Right cardiac atrium (tissue), 5 donors: ENCODE measurements at regions of chr6 and their contacts with region 1.

Region 1: GRCh38 chr6:147604373-147604772 is 95.9 kb downstream of the SAMD5 start:
- DNase-seq: no peak
- ATAC-seq: no peak
- H3K4me3 ChIP-seq: no peak overlapping the region
- H3K27ac ChIP-seq: peak overlapping the region; percentile 13
- H3K4me1 ChIP-seq: peaks cover 3% of the 10 kb centered on the region
- H3K27me3 ChIP-seq: no peaks in the 10 kb centered on the region

Region 2: DNA sequence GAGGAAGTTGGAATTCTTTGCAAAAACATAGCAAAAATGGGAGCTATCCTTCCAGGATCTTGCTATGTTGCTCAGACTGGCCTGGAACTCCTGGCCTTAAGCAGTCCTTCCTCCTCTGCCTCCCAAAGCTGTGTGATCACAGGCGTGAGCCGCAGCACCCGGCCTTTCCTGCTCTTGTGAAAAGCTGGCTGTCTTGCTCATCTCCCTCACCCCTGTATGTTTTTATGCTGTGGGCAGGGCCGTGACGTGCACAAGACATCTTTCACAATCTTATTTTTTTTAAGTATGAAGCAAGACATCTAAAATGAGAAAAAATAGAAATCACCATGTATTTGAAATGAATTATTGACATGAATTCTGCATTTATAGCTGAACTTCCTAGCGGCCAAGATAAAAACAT is 14.6 kb after region 1 on chr6:
- intact Hi-C with region 1: loop called in 1 of 4 experiments (anchors 1 kb)
- DNase-seq: no peak
- ATAC-seq: peak; percentile 37 to 41
- H3K4me3 ChIP-seq: no peak overlapping the region
- H3K27ac ChIP-seq: peak overlapping the region; percentile 45
- H3K4me1 ChIP-seq: no peaks in the 10 kb centered on the region
- H3K27me3 ChIP-seq: no peaks in the 10 kb centered on the region

Region 3: DNA sequence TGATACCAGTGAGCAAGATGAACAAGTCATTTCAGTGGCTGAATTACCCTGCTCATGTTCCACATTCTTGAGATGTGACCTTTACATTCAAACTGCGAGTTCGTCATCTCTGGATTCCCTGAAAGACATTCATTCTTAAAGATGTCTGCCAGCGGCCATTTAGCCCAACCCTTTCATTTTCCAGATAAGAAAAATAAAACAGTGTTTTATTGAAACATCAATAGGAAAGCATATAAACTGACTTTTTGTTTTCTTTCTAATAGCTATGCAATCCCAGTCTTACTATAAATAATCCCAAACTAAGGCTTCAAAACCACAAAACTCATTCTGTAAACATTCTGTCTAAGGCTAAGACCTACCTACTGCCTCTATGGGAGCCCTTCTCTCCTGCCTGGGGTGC is 38.1 kb after region 1 on chr6:
- intact Hi-C with region 1: no loop called
- DNase-seq: no peak
- ATAC-seq: no peak
- H3K4me3 ChIP-seq: no peak overlapping the region
- H3K27ac ChIP-seq: no peak overlapping the region
- H3K4me1 ChIP-seq: no peaks in the 10 kb centered on the region
- H3K27me3 ChIP-seq: no peaks in the 10 kb centered on the region